ENCODE measurements at regions of chr2 and their contacts with region 1.

Region 1: DNA sequence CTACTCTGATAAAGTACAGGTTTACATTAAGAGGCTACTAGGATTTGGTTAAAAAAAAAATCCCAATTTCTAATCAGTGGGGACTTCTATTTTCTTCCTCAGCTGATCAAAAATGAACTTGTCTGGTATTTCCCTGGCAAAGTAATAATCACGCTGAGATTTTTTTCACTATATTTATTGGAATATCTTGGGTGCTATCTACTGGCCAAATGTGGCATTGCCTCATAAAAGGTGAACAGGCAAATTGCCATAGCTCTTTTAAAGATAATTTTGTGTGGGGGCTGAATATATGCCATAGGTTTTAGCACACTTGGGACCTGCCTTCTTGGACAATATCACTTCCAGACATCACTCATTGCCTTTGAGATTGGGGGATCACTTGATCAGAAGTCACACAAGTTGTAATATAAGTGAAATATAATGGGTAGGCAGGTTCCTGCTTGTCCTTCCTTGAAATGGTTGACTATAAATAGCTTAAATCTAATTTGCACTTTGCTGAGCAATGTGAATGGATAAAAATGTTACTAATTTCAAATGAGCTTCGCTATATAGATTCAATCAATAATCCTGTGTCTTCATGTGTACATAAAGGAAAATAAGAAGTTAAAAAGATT is 7.0 kb upstream of the NXPH2 start:
- DNase-seq: peak; percentile 41

Region 2: GRCh38 chr2:137910641-137911040 is 876.5 kb before region 1 on chr2:
- CTCF ChIA-PET with region 1: interaction called, 12 read pairs
- POLR2A ChIA-PET with region 1: no interaction called
- DNase-seq: no peak

Region 3: DNA sequence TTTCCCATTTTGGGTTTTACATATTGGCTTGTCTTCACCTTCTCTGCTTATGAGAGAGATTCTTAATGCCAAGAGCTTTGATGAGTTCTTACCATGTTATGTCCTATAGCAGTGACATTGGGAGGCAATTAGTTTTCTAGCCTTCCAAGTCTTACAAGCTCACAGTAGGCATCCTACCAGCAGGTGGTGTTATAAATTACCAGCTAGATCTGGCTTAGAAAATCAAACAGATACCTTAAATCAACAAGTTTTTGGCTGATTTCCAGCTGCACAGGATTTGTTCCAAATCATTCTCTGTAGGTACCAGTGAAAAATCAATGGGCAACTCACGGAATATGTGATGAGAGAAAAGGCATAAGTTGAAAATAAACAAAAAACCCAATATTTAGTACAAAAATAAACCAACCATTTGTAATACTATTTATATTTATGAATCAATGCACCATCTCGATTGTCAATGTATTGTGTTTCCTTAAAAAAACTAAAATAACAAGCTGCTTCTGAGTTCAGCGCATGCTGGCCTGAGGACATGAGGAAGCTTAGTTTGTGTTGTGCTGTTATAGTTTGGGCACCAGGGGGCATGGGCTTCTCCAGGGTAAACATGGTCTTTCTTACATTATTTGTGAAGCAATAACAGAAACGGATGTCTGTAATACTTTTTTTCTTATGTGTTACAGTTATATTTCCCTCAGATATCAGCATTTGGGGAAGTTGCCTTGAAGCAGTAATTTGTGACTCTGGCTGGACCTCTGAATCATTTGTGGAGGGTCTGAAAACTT is 27.1 kb after region 1 on chr2:
- CTCF ChIA-PET with region 1: no interaction called
- POLR2A ChIA-PET with region 1: no interaction called
- DNase-seq: peak; percentile 34

Region 4: GRCh38 chr2:138877446-138877845 is 90.3 kb after region 1 on chr2:
- CTCF ChIA-PET with region 1: no interaction called
- POLR2A ChIA-PET with region 1: no interaction called
- DNase-seq: no peak